T-cell (primary cell): ENCODE measurements at regions of chr1 and their contacts with region 1.

Region 1: GRCh38 chr1:226121587-226122400 is 59.3 kb downstream of the H3-3A start:
- DNase-seq: peak; percentile 29 to 87 (median 62)
- ATAC-seq: peak; percentile 70 to 78 (median 76)
- H3K4me3 ChIP-seq: peak overlapping the region; percentile 48 to 51
- H3K4me3 Mint-ChIP-seq: peak overlapping the region; percentile 76 to 82 (median 79)
- H3K27ac ChIP-seq: peak overlapping the region; percentile 74
- H3K27ac Mint-ChIP-seq: peak overlapping the region in 1 of 2 donors; percentile 31
- H3K4me1 ChIP-seq: peaks cover 7 to 35% of the 10 kb centered on the region in 2 experiments
- H3K4me1 Mint-ChIP-seq: peaks cover 25 to 43% (median 29%) of the 10 kb centered on the region in 3 donors
- H3K27me3 ChIP-seq: peaks cover 0 to 18% of the 10 kb centered on the region in 2 experiments
- H3K27me3 Mint-ChIP-seq: no peaks in the 10 kb centered on the region

Region 2: DNA sequence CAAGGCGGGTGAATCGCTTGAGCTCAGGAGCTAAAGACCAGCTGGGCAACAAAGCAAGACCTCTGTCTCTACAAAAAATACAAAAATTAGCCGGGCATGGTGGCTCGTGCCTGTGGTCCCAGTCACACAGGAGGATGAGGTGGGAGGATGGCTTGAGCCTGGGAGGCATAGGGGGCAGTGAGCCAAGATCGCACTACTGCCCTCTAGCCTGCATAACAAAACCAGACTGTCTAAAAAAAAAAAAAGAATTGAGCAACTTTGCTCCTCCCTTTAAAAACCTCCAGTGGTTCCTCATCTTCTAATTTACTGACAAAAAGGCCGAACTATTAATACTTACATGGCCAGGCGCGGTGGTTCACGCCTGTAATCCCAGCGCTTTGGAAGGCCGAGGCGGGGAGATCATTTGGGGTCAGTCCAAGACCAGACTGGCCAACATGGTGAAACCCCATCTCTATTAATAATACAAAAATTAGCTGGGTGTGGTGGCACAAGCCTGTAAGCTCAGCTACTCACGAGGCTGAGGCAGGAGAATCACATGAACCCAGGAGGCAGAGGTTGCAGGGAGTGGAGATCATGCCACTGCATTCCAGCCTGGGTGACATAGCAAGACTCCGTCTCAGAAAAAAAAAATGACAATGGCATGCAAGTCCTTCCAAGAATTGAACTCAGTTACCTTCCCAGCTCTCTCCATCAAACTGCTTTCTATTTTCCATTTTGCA is 60.4 kb after region 1 on chr1:
- CTCF ChIA-PET with region 1: interaction called, 4 to 12 read pairs
- POLR2A ChIA-PET with region 1: interaction called in 1 of 2 experiments, 3 read pairs
- DNase-seq: peak in 1 of 35 experiments; percentile 8
- ATAC-seq: no peak
- H3K4me3 ChIP-seq: no peak overlapping the region
- H3K4me3 Mint-ChIP-seq: peak overlapping the region in 1 of 3 donors; percentile 30
- H3K27ac ChIP-seq: no peak overlapping the region
- H3K27ac Mint-ChIP-seq: peak overlapping the region in 1 of 2 donors; percentile 10
- H3K4me1 ChIP-seq: peaks cover 13 to 34% of the 10 kb centered on the region in 2 experiments
- H3K4me1 Mint-ChIP-seq: peaks cover 68 to 76% (median 71%) of the 10 kb centered on the region in 3 donors
- H3K27me3 ChIP-seq: no peaks in the 10 kb centered on the region
- H3K27me3 Mint-ChIP-seq: no peaks in the 10 kb centered on the region

Region 3: GRCh38 chr1:226195144-226195543 is 73.3 kb after region 1 on chr1:
- CTCF ChIA-PET with region 1: interaction called, 21 to 25 read pairs
- POLR2A ChIA-PET with region 1: no interaction called
- DNase-seq: no peak
- ATAC-seq: no peak
- H3K4me3 ChIP-seq: no peak overlapping the region
- H3K4me3 Mint-ChIP-seq: no peak overlapping the region
- H3K27ac ChIP-seq: no peak overlapping the region
- H3K27ac Mint-ChIP-seq: no peak overlapping the region
- H3K4me1 ChIP-seq: peaks cover 0 to 3% of the 10 kb centered on the region in 2 experiments
- H3K4me1 Mint-ChIP-seq: peaks cover 0 to 3% (median 2%) of the 10 kb centered on the region in 3 donors
- H3K27me3 ChIP-seq: peaks cover 0 to 12% of the 10 kb centered on the region in 2 experiments
- H3K27me3 Mint-ChIP-seq: peaks cover 3 to 6% of the 10 kb centered on the region in 2 donors

Region 4: DNA sequence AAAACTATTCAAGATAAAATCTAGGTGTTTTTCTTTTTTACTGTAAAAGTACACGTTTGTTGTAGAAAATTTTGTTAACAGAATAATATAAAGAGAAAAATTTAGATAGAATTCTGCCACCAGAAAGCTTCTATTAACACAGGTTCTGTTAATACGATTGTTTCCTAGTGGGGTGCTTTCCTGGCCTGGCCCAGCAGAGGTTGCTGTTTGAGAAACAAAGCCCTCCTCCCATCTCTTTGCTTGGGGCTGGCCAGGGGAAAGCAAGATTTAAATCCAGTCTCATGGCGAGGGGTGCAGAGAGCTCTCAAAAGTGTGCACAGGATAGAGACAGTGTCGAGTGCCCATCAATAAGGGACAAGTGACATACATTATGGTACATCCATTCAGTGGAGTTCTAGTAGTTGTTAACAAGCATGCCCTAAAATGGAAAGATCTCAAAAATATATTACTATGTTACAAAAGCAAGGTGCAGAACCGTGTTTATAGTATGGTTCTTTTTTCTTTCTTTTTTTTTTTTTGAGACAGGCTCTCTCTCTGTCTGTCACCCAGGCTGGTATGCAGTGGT is 79.3 kb after region 1 on chr1:
- CTCF ChIA-PET with region 1: interaction called, 21 to 25 read pairs
- POLR2A ChIA-PET with region 1: no interaction called
- DNase-seq: peak in 1 of 35 experiments; percentile 9
- ATAC-seq: no peak
- H3K4me3 ChIP-seq: no peak overlapping the region
- H3K4me3 Mint-ChIP-seq: no peak overlapping the region
- H3K27ac ChIP-seq: no peak overlapping the region
- H3K27ac Mint-ChIP-seq: no peak overlapping the region
- H3K4me1 ChIP-seq: peaks cover 0 to 3% of the 10 kb centered on the region in 2 experiments
- H3K4me1 Mint-ChIP-seq: peaks cover 0 to 3% (median 2%) of the 10 kb centered on the region in 3 donors
- H3K27me3 ChIP-seq: peaks cover 0 to 15% of the 10 kb centered on the region in 2 experiments
- H3K27me3 Mint-ChIP-seq: peaks cover 4 to 15% of the 10 kb centered on the region in 2 donors

Region 5: DNA sequence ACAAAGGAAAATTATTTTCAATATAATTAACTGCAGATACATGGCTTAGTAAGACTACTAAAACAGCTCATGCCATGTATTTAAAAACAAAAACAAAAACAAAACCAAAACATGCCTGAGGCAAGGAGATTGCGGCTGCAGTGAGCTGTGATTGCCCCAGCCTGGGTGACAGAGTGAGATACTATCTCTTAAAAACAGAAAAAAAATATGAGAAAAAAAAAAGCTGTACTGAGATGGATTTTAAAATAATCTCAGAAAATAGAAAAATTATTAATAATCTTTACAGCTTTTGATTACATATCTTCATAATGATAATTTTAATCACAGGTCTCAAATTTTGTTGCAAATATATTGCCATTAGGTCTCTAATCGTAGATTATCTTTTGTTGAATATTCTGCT is 211.2 kb after region 1 on chr1:
- CTCF ChIA-PET with region 1: interaction called, 4 to 16 read pairs
- POLR2A ChIA-PET with region 1: no interaction called
- DNase-seq: peak in 2 of 35 experiments; percentile 3 to 18
- ATAC-seq: peak in 2 of 4 experiments; percentile 32 to 47
- H3K4me3 ChIP-seq: no peak overlapping the region
- H3K4me3 Mint-ChIP-seq: peak overlapping the region; percentile 11 to 45 (median 34)
- H3K27ac ChIP-seq: no peak overlapping the region
- H3K27ac Mint-ChIP-seq: no peak overlapping the region
- H3K4me1 ChIP-seq: peaks cover 0 to 2% of the 10 kb centered on the region in 2 experiments
- H3K4me1 Mint-ChIP-seq: peaks cover 0 to 8% (median 6%) of the 10 kb centered on the region in 3 donors
- H3K27me3 ChIP-seq: no peaks in the 10 kb centered on the region
- H3K27me3 Mint-ChIP-seq: no peaks in the 10 kb centered on the region